Heart right ventricle (tissue), 16 donors: ENCODE measurements at regions of chr11 and their contacts with region 1.

Region 1: GRCh38 chr11:75896843-75897419 is 81.9 kb downstream of the UVRAG start:
- DNase-seq: no peak
- ATAC-seq: peak in 4 of 8 donors; percentile 29 to 65 (median 49)
- H3K4me3 ChIP-seq: no peak overlapping the region
- H3K27ac ChIP-seq: no peak overlapping the region
- H3K4me1 ChIP-seq: peaks cover 0 to 35% (median 10%) of the 10 kb centered on the region in 9 donors
- H3K27me3 ChIP-seq: no peaks in the 10 kb centered on the region
- CTCF ChIP-seq: peak; percentile 58 to 85 (median 73)

Region 2: GRCh38 chr11:75920848-75921247 is 23.9 kb after region 1 on chr11:
- intact Hi-C with region 1: loop called in 1 of 10 experiments (anchors 2 kb)
- DNase-seq: no peak
- ATAC-seq: no peak
- H3K4me3 ChIP-seq: no peak overlapping the region
- H3K27ac ChIP-seq: no peak overlapping the region
- H3K4me1 ChIP-seq: peaks cover 3 to 31% (median 23%) of the 10 kb centered on the region in 9 donors
- H3K27me3 ChIP-seq: no peaks in the 10 kb centered on the region
- CTCF ChIP-seq: no peak

Region 3: DNA sequence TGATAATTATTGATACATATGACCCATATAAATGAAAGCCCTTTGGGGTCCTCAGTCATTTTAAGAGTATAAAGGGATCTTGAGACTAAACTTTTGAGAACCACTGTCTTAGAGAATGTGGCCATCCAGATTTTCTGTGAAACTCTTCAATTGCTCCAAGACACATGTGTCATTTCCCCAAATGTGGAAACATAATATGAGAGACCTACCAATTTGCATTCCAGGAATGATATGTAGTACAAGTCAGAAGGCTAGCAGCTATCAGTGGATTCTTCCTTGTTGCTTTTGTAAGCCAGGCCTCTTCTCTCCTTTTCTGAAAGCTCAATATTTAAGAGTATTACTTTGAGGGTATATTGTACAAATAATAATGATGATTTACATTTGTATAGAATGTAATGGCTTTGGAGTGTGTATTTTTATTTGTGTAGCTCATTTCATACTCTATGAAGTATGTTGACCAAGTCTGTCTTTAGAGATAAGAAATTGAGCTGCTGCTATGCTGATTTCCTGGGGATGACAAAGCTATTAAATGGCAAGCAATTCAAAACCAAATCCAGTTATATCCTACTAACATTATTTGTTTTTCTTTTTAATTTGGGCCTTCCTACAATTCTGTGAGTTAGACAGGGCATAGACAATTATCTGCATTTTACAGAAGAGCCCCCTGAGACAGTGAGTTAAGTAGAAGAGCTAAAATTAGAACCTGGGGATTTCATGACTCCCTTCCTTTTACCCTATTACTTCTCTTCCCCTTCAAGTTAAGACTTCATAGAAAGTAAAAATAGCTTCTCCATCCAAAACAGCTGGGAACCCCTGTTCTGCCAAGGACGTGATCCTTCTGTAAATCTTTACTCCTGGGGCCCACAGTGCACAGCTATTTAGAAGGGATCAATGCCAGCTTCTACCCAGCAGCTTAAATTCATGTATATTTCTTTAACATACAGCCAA is 177.5 kb after region 1 on chr11:
- intact Hi-C with region 1: loop called in 1 of 10 experiments (anchors 2 kb)
- DNase-seq: no peak
- ATAC-seq: peak in 7 of 8 donors; percentile 17 to 63 (median 47)
- H3K4me3 ChIP-seq: no peak overlapping the region
- H3K27ac ChIP-seq: peak overlapping the region in 7 of 10 donors; percentile 1 to 72 (median 10)
- H3K4me1 ChIP-seq: peaks cover 0 to 51% (median 39%) of the 10 kb centered on the region in 9 donors
- H3K27me3 ChIP-seq: no peaks in the 10 kb centered on the region
- CTCF ChIP-seq: no peak